PC-3 (cell line): ENCODE measurements at regions of chr2 and their contacts with region 1.

Region 1: GRCh38 chr2:213151437-213152064 is at the start of gene IKZF2:
- DNase-seq: peak; percentile 86
- ATAC-seq: peak; percentile 72
- H3K4me3 ChIP-seq: peak within 1 kb of the TSS; percentile 91
- H3K27ac ChIP-seq: peak within 1 kb of the TSS; percentile 73
- H3K4me1 ChIP-seq: peaks cover 24% of the 10 kb centered on the region
- H3K27me3 ChIP-seq: no peaks in the 10 kb centered on the region
- CTCF ChIP-seq: no peak
- total RNA-seq, gene IKZF2: 5.2 and 8.2 TPM in 2 replicates

Region 2: DNA sequence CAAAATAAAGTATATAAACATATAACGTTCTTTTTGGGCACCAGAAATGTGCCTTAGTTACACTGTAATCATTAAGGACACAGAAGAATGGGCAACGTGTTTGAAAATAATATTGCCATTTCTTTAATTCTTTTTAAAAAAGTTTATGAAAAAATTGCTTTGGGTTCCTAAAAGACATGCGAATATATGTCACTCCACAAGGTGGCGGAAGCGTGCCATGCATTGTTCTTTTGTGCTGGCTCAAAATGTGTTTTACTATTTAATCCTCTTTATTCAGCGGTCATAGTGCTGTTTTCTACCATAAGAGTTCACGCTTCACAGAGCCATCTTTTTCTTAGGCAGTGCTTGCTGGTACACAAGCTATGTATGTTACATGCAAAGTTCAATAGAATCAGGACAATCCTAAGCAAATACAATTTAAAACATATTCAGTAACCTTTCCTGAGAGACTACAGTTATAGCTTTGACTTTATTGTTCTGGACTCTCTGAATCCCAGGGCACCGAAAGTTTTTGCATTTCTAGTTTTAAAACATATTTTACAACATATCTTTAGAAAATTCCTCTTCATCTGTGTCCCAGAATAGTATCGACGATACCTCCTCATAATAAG is 465.2 kb before region 1 on chr2:
- CTCF ChIA-PET with region 1: no interaction called
- POLR2A ChIA-PET with region 1: no interaction called
- intact Hi-C with region 1: loop called (anchors 1 kb)
- DNase-seq: peak; percentile 77
- ATAC-seq: peak; percentile 59
- H3K4me3 ChIP-seq: no peak overlapping the region
- H3K27ac ChIP-seq: no peak overlapping the region
- H3K4me1 ChIP-seq: peaks cover 9% of the 10 kb centered on the region; the same call in 1 of the 2 replicates
- H3K27me3 ChIP-seq: no peaks in the 10 kb centered on the region
- CTCF ChIP-seq: peak; percentile 92

Region 3: DNA sequence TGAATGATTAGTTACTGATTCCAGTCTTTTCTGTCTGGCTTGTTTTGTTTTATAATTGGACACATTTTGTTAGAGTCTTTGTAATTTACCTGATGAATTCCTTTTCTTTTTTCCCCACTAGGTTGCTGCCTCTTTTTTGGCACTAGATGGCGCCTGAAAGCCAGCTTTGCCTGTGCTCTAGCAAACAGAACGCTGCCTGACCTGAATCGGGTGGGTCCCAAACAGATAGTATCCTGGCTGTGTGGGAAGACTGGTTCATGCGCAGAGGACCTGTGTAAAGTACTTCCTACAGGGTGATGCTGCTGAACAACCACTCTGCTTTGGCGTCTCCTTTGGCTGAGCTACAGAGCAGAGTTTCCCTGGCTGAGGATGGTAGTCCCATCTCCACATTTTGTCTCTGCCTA is 288.4 kb before region 1 on chr2:
- CTCF ChIA-PET with region 1: interaction called, 6 read pairs
- POLR2A ChIA-PET with region 1: no interaction called
- intact Hi-C with region 1: loop called (anchors 1 kb)
- DNase-seq: peak; percentile 64
- ATAC-seq: peak; percentile 18; the same call in 1 of the 2 replicates
- H3K4me3 ChIP-seq: no peak overlapping the region
- H3K27ac ChIP-seq: no peak overlapping the region
- H3K4me1 ChIP-seq: no peaks in the 10 kb centered on the region
- H3K27me3 ChIP-seq: no peaks in the 10 kb centered on the region
- CTCF ChIP-seq: peak; percentile 87

Region 4: GRCh38 chr2:212905640-212906220 is 245.8 kb before region 1 on chr2:
- CTCF ChIA-PET with region 1: interaction called, 6 read pairs
- POLR2A ChIA-PET with region 1: no interaction called
- intact Hi-C with region 1: loop called (anchors 2 kb)
- DNase-seq: peak; percentile 98
- ATAC-seq: peak; percentile 87
- H3K4me3 ChIP-seq: peak overlapping the region; percentile 52; the same call in 1 of the 2 replicates
- H3K27ac ChIP-seq: peak overlapping the region; percentile 95
- H3K4me1 ChIP-seq: peaks cover 51% of the 10 kb centered on the region
- H3K27me3 ChIP-seq: no peaks in the 10 kb centered on the region
- CTCF ChIP-seq: no peak

Region 5: DNA sequence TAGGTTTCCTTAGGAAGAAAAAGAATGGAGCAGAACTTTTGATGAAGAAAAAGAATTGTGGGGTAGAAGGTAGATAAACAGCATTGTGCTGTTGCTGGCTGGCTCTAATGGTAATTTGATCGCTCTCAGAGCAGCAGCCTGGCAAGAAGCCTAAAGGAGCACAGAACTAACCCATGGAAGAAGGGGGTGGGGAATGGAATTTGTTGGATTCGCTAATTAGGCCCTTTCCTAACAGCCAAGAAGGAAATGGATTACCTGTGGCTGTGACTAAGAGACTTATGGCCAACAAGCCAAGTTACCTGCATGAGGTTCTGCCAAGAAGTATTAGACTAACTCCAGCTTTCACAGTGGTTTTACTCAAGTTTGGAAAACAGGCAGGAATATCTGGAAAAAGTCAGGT is 210.7 kb before region 1 on chr2:
- CTCF ChIA-PET with region 1: no interaction called
- POLR2A ChIA-PET with region 1: no interaction called
- intact Hi-C with region 1: loop called (anchors 2 kb)
- DNase-seq: peak; percentile 75
- ATAC-seq: peak; percentile 60
- H3K4me3 ChIP-seq: peak overlapping the region; percentile 9; the same call in 1 of the 2 replicates
- H3K27ac ChIP-seq: peak overlapping the region; percentile 71
- H3K4me1 ChIP-seq: peaks cover 26% of the 10 kb centered on the region
- H3K27me3 ChIP-seq: no peaks in the 10 kb centered on the region
- CTCF ChIP-seq: no peak

Region 6: DNA sequence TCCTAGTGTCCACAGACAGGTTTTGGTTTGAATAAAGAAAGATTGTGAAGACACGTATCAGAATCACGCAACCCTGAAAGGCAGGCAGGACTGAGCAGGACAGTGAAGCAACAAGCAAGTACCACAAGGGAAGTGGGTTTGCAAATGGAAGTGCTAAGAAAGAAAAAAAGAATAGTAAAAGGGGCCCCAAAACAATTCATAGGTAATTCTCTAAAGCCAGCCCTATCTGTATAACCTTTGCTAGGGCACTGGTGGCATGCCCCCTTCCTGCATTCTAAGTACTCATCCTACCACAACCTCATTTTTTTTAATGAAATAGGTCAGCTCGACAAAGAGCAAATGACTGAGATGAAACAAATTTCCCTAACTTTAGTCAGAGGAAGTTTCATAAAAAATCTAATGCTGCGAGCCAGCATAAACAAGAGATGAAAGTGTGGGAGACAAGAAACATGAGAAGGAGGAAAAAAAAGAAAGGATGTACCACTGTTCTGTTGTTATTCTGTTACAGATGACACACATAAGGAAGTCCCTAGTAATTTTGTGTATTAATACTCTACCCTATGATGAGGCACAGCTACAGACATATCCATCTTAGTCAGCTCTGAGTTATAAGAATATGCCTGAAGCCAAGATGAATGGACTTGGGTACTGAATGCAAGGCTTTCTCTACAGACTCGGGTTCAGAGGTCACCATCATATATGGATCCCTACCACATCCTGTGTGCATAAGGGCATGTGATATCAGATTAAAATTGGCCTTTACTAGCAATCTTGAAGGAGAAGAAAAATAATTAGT is 32.3 kb before region 1 on chr2:
- CTCF ChIA-PET with region 1: no interaction called
- POLR2A ChIA-PET with region 1: no interaction called
- intact Hi-C with region 1: loop called (anchors 2 kb)
- DNase-seq: peak; percentile 76
- ATAC-seq: peak; percentile 93
- H3K4me3 ChIP-seq: no peak overlapping the region
- H3K27ac ChIP-seq: peak overlapping the region; percentile 73
- H3K4me1 ChIP-seq: peaks cover 33% of the 10 kb centered on the region
- H3K27me3 ChIP-seq: no peaks in the 10 kb centered on the region
- CTCF ChIP-seq: no peak

Region 7: GRCh38 chr2:213238753-213239495 is 87.4 kb after region 1 on chr2:
- CTCF ChIA-PET with region 1: no interaction called
- POLR2A ChIA-PET with region 1: no interaction called
- intact Hi-C with region 1: loop called (anchors 5 kb)
- DNase-seq: peak; percentile 90
- ATAC-seq: peak; percentile 95
- H3K4me3 ChIP-seq: peak overlapping the region; percentile 51
- H3K27ac ChIP-seq: peak overlapping the region; percentile 78
- H3K4me1 ChIP-seq: peaks cover 26% of the 10 kb centered on the region
- H3K27me3 ChIP-seq: no peaks in the 10 kb centered on the region
- CTCF ChIP-seq: no peak